Heart left ventricle (tissue), 16 donors: ENCODE measurements at regions of chr9 and their contacts with region 1.

Region 1: GRCh38 chr9:19018201-19018600 is 14.8 kb downstream of the SAXO1 start:
- DNase-seq: no peak
- ATAC-seq: no peak
- H3K4me3 ChIP-seq: no peak overlapping the region
- H3K27ac ChIP-seq: no peak overlapping the region
- H3K4me1 ChIP-seq: peaks cover 0 to 2% (median 0%) of the 10 kb centered on the region in 12 donors
- H3K27me3 ChIP-seq: no peaks in the 10 kb centered on the region
- CTCF ChIP-seq: no peak
- POLR2A ChIP-seq: no peak

Region 2: GRCh38 chr9:18250053-18250452 is 768.1 kb before region 1 on chr9:
- intact Hi-C with region 1: loop called in 6 of 10 experiments (anchors 5 kb)
- DNase-seq: no peak
- ATAC-seq: no peak
- H3K4me3 ChIP-seq: no peak overlapping the region
- H3K27ac ChIP-seq: no peak overlapping the region
- H3K4me1 ChIP-seq: no peaks in the 10 kb centered on the region
- H3K27me3 ChIP-seq: no peaks in the 10 kb centered on the region
- CTCF ChIP-seq: no peak
- POLR2A ChIP-seq: no peak

Region 3: GRCh38 chr9:18442629-18443491 is 575.3 kb before region 1 on chr9:
- intact Hi-C with region 1: loop called in 7 of 10 experiments (anchors 5 to 10 kb)
- DNase-seq: peak; percentile 68 to 81 (median 72)
- ATAC-seq: peak; percentile 74 to 89 (median 81)
- H3K4me3 ChIP-seq: no peak overlapping the region
- H3K27ac ChIP-seq: peak overlapping the region in 1 of 12 donors; percentile 31
- H3K4me1 ChIP-seq: peaks cover 0 to 21% (median 11%) of the 10 kb centered on the region in 12 donors
- H3K27me3 ChIP-seq: no peaks in the 10 kb centered on the region
- CTCF ChIP-seq: peak; percentile 86 to 97 (median 92)
- POLR2A ChIP-seq: no peak

Region 4: GRCh38 chr9:18499980-18500379 is 518.2 kb before region 1 on chr9:
- intact Hi-C with region 1: loop called in 1 of 10 experiments (anchors 10 kb)
- DNase-seq: no peak
- ATAC-seq: peak in 1 of 4 donors; percentile 36
- H3K4me3 ChIP-seq: no peak overlapping the region
- H3K27ac ChIP-seq: no peak overlapping the region
- H3K4me1 ChIP-seq: peaks cover 0 to 10% (median 0%) of the 10 kb centered on the region in 12 donors
- H3K27me3 ChIP-seq: no peaks in the 10 kb centered on the region
- CTCF ChIP-seq: no peak
- POLR2A ChIP-seq: no peak

Region 5: GRCh38 chr9:18821794-18822193 is 196.4 kb before region 1 on chr9:
- intact Hi-C with region 1: no loop called
- DNase-seq: no peak
- ATAC-seq: no peak
- H3K4me3 ChIP-seq: no peak overlapping the region
- H3K27ac ChIP-seq: no peak overlapping the region
- H3K4me1 ChIP-seq: peaks cover 0 to 20% (median 12%) of the 10 kb centered on the region in 12 donors
- H3K27me3 ChIP-seq: no peaks in the 10 kb centered on the region
- CTCF ChIP-seq: no peak
- POLR2A ChIP-seq: no peak